OCI-LY7 (cell line): ENCODE measurements at regions of chr1 and their contacts with region 1.

Region 1: DNA sequence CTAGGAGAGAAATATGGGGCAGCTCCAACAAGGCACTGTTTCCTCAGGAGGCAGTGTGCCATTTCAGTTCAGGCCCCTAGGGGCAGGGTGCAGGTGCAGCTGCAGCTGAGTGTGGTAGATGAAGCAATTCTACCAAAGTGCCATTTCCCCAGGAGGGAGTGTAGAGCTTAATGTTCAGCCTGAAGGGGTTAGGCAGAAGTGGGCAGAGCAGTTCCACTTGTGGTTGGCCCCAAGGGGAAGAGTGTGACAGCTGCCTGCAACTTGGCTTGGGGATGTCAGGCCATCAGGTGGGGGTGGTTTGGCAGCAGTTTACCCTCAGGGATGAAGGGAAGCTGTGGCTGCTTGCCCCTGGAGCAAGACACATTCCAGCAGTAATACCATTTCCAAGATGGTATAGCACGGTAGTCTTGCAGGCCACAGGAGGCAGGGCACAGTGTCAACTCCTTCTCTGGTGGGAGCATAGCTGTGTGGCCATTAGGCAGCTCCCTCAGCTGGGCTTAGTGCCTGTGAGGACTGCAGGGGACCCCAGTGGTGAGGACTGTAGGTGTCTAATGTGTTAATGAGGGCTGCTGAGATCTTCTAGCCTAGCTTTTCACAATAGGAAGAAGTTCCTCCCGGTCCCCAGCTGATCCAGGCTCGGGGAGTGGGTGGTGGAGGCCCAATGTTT is 34.8 kb downstream of the RGSL1 start:
- DNase-seq: peak; percentile 90
- H3K4me3 ChIP-seq: no peak overlapping the region
- H3K27ac ChIP-seq: peak overlapping the region; percentile 39
- H3K4me1 ChIP-seq: peaks cover 23% of the 10 kb centered on the region
- CTCF ChIP-seq: peak; percentile 81

Region 2: DNA sequence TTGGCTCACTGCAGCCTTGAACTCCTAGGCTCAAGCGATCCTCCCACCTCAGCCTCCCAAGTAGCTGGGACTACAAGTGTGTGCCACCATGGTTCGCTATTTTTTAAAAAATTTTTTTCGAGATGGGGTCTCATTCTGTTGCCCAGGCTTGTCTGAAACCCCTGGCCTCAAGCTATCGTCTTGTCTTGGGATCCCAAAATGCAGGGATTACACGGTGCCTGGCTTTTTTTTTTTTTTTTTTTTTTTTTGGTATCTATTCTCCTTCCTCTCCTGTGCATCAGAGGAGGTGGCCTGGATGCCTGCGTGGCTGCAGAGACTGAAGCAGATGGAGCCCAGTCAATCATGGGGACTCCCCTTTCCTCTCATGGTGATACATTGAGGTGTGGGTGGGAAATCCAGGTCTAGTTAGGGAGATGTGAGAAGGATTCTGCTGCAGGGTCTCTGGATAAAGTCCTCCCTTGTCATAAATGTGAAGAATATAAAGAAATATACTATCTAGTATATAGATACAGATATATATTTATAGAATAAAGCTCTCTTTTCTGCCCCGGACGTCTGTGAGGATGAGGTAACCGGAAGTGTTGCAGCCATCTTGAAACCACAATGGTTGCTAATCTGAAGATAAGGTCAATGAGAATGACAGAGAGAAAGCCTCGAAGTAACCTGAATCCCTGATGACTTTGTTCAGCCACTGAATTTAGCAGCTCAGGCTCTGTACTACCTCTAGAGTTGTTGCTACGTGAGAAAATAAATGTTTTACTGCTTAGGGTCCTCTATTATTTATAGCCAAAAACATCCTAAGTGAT is 54.3 kb before region 1 on chr1:
- CTCF ChIA-PET with region 1: no interaction called
- POLR2A ChIA-PET with region 1: no interaction called
- intact Hi-C with region 1: no loop called
- DNase-seq: no peak
- H3K4me3 ChIP-seq: no peak overlapping the region
- H3K27ac ChIP-seq: no peak overlapping the region
- H3K4me1 ChIP-seq: no peaks in the 10 kb centered on the region
- CTCF ChIP-seq: no peak

Region 3: DNA sequence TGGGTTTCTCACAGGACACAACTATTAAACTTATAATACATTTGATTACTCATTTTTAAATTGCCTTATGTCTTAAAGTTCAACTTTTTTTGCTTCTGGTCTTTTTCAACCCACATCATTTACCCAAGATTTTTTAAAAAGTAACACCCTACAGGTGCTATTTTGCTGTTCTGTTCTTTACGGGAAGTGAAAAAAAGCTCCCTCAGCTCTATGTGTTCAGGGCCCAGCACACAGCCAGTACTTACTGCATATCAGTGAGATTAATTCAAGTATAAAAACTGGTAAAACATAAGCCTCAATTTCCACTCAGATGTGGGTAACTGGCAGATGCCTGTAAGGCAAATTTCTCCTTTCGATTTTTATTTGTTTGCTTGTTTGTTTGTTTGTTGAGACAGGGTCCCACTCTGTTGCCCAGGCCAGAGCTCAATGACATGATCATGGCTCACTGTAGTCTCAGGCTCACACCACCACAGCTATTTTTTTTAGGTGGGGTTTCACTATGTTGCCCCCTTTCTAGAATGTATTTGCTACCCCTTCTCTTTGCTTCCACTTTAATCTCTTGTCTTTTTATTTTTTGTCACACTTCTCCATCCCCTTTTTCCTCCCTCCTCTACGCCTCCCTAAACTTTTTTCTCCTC is 84.0 kb after region 1 on chr1:
- CTCF ChIA-PET with region 1: interaction called, 3 read pairs
- POLR2A ChIA-PET with region 1: interaction called, 11 read pairs
- intact Hi-C with region 1: no loop called
- DNase-seq: peak; percentile 73
- H3K4me3 ChIP-seq: no peak overlapping the region
- H3K27ac ChIP-seq: peak overlapping the region; percentile 66
- H3K4me1 ChIP-seq: peaks cover 41% of the 10 kb centered on the region
- CTCF ChIP-seq: no peak